ENCODE measurements at regions of chr11 and their contacts with region 1.

Region 1: DNA sequence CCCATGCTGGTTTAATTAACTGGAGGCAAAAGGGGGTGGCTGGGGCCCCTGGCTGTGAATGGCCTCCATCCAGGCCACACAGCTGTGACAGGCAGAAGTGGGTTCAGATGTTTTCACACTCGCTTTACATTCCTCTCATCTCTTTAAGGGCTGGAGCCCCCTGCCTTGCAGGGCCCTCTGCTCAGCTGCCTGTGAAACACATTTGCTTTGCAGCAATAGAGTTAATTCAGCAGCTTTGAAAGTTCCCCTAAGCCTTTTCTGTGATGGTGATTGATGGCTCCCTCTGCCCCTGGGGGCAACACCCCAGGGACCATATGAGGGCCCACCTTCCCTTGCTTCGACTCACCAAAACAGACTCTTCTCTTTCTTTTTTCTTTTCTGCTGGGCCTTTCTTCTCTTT is 139.3 kb downstream of the FEZ1 start:
- DNase-seq: no peak
- ATAC-seq: no peak
- H3K4me3 Mint-ChIP-seq: no peak overlapping the region
- H3K27ac Mint-ChIP-seq: no peak overlapping the region
- H3K4me1 Mint-ChIP-seq: no peaks in the 10 kb centered on the region
- H3K27me3 Mint-ChIP-seq: no peaks in the 10 kb centered on the region

Region 2: DNA sequence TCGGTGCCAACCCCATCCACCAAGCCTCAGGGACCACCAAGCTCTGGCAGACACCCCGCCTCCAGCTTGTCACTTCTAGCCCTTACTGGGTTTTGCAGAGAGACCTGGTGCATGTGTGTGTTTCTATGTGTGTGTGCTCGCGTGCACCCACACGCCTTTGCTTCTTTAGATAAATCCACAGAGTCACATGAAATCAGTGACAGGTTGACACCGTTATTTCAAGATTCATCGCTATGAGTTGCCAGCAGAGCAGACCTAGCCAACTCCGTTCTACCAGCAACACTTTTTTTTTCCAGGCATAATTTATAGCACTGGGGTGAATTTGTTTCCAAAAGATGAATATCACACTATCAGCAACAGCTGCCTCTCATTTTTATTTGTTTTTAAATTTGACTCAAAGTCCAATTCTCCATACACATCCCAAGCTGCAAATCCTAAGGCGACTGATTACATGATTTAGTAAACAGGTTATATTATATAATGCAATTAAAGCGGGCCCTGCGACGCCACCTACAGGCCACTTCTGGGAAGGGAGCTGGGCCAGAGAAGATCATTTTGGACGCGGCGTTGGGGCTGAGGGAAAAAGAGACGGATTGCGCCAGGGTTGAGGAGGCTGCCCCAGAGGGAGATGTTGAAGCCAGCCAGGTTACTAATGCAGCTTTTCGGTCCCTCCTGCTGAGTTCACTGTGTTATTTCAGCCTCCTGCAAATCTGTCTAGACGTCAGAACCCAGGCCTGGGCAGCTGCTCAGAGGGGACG is 11.2 kb before region 1 on chr11:
- CTCF ChIA-PET with region 1: interaction called, 15 read pairs
- POLR2A ChIA-PET with region 1: no interaction called
- DNase-seq: peak; percentile 55
- ATAC-seq: peak; percentile 69
- H3K4me3 Mint-ChIP-seq: no peak overlapping the region
- H3K27ac Mint-ChIP-seq: no peak overlapping the region
- H3K4me1 Mint-ChIP-seq: no peaks in the 10 kb centered on the region
- H3K27me3 Mint-ChIP-seq: peaks cover 10% of the 10 kb centered on the region